Endothelial cell of umbilical vein (primary cell): ENCODE measurements at regions of chr4 and their contacts with region 1.

Region 1: GRCh38 chr4:8468746-8469535 is 28.4 kb downstream of the TRMT44 start:
- DNase-seq: peak; percentile 45
- H3K4me3 ChIP-seq: no peak overlapping the region
- H3K27ac ChIP-seq: no peak overlapping the region
- H3K4me1 ChIP-seq: no peaks in the 10 kb centered on the region
- H3K27me3 ChIP-seq: no peaks in the 10 kb centered on the region
- CTCF ChIP-seq: peak; percentile 88 to 97
- POLR2A ChIP-seq: no peak

Region 2: DNA sequence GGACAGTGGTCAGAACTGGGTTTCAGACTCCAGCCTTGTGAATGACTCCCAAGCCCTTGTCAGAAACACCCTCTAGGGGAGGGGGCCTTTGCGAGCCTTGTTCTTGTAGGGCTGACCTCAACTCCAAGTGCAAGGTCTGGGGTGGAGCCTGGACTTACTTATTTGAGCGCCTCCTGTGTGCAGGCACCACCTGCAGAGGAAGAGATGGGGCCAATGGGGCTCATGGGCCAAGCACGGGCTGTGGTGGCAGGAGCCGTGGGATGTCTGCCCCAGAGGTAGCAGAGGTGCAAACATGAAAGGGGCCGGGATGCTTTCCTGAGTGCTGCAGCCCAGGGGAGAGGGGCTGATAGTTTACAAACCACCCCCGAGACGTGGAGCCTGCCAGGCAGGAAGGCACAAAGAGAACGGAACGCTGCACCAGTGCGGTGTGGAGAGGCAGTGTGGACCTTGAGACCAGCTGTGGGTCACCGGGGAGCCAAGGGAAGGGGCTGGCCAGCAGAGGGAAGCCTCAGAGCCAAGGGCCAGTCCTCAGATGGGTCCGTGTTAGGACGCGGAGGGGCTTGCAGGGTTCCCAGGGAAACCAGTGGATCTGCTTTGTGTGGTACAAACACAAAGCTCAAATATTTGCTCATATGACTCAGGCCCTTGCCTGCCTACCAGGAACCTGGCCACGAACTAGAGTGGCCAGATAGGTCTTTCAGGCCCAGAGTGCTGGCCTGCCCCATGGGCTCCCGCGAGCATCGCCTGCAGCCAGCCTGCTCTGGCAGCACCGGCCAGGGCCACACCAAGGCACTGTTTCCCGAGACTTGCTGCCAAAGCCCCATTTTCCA is 1434.5 kb before region 1 on chr4:
- CTCF ChIA-PET with region 1: no interaction called
- POLR2A ChIA-PET with region 1: no interaction called
- dilution Hi-C with region 1: no loop called
- intact Hi-C with region 1: no loop called
- DNase-seq: no peak
- H3K4me3 ChIP-seq: no peak overlapping the region
- H3K27ac ChIP-seq: no peak overlapping the region
- H3K4me1 ChIP-seq: no peaks in the 10 kb centered on the region
- H3K27me3 ChIP-seq: no peaks in the 10 kb centered on the region
- CTCF ChIP-seq: no peak
- POLR2A ChIP-seq: no peak

Region 3: DNA sequence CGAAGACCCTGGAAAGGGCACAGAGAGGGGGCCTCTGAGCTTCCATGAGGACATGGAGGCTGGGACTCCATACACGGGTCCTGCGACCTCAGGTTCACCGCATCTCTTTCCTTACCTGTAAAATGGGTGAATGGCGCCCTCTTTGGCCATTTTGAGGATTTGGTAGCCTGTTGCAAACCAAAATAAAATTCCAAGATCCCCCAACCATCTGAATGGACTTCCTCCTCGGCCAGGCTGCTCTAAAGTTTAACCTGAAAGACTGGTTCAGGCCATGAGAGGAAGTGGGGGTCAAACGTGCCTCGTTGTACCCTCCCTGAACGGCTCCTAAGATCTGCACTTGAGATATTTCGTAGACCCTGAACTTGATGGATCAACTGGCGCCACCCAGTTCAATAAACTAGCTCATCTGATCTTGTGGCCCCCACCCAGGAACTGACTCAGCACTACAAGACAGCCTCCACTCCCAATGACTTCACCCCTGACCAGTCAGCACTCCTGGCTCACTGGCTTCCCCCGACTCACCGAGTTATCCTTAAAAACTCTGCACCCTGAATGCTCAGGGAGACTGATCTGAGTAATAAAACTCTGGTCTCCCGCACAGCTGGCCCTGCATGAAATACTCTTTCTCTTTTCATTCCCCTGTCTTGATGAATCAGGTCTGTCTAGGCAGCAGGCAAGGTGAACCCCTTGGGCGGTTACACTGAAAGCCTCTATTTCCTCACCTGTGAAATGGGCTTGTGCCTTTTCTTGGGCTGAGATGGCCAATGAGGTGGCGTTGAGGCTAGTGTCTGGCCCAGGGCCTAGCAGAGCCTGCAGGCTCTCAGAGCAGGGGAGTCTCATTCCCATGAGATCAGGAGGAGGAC is 78.4 kb after region 1 on chr4:
- CTCF ChIA-PET with region 1: interaction called, 28 read pairs
- POLR2A ChIA-PET with region 1: no interaction called
- dilution Hi-C with region 1: no loop called
- intact Hi-C with region 1: loop called (anchors 1 kb)
- DNase-seq: no peak
- H3K4me3 ChIP-seq: no peak overlapping the region
- H3K27ac ChIP-seq: no peak overlapping the region
- H3K4me1 ChIP-seq: no peaks in the 10 kb centered on the region
- H3K27me3 ChIP-seq: no peaks in the 10 kb centered on the region
- CTCF ChIP-seq: peak; percentile 3 to 18
- POLR2A ChIP-seq: no peak